Thyroid gland (tissue), 4 donors: ENCODE measurements at regions of chr9 and their contacts with region 1.

Region 1: DNA sequence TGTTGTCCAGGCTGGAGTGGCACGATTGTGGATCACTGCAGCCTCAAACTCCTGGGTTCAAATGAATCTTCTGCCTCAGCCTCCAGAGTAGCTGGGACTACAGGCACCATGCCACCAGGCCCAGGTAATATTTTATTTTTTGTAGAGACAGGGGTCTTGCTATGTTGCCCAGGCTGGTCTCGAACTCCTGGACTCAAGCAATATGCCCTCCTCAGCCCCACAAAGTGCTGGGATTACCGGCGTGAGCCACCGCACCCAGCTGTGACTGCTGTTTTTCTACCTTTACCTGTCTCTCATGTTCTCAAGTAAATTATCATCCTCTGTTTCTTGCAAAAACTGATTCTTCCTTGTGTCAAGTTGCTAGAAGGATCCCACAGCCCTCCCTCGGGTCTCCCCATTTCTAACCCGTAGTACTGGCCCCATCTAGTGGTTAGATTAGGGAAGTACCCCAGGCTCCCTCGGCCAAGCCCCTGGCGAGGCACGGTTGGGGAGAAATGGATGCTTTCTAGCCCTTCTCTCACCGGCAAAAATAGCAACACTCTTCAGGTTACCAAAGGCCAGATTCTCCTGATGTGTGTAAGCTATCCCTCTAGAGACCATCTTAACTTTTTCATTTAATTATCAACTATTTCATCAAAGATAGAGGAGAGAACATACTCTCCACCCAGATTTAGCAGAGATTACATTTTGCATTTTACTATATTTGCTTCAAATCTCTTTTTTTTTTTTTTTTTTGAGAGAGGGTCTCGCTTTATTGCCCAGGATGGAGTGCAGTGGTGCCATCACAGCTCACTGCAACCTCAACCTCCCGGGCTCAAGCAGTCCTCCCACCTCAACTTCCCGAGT is 19.2 kb upstream of the TOR1B start:
- DNase-seq: peak; percentile 64 to 65
- H3K4me3 ChIP-seq: no peak overlapping the region
- H3K27ac ChIP-seq: no peak overlapping the region
- H3K4me1 ChIP-seq: no peaks in the 10 kb centered on the region
- H3K27me3 ChIP-seq: no peaks in the 10 kb centered on the region
- CTCF ChIP-seq: peak; percentile 59 to 91 (median 88)
- POLR2A ChIP-seq: no peak

Region 2: DNA sequence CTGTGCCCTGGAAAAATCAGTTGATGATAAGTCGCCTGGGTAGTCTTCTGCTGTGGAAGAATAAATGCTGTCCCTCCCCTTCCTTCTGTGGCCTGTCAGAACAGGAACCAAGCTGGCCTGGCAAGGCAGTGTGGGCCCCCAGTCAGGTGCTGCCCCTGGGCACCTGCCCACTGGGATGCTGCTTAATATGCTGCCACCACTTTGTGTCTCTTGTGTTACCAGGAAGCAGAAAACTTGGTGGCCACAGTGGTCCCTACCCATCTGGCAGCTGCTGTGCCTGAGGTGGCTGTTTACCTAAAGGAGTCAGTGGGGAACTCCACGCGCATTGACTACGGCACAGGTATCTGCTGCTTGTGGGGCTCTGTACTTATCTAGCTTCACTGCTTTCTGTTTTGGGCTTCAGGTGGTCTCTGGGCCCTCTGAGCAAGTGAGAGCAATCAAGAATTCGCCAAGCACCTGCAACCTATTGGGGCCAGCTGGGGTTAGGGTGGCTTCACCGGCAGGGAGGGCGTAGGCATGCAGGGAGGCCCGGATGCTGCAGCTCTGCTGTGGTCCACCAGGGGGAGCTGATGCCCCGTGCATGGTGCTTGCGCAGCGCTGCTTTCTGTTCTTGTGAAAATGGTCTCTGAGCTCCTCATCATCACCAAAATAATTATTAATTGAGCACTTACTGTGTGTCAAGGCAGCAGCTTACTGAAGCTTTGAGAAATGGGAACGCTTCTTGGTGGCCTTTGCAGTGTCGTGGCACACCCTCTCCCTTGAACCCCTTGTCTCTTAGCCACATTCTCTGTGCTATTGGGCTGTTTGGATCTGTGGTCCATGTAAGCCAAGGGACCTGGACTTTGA is 652.2 kb before region 1 on chr9:
- intact Hi-C with region 1: loop called (anchors 5 kb)
- DNase-seq: peak; percentile 66 to 75
- H3K4me3 ChIP-seq: no peak overlapping the region
- H3K27ac ChIP-seq: no peak overlapping the region
- H3K4me1 ChIP-seq: peaks cover 0 to 14% of the 10 kb centered on the region in 2 donors
- H3K27me3 ChIP-seq: no peaks in the 10 kb centered on the region
- CTCF ChIP-seq: peak; percentile 87 to 99 (median 96)
- POLR2A ChIP-seq: no peak

Region 3: GRCh38 chr9:129648092-129648763 is 135.5 kb before region 1 on chr9:
- intact Hi-C with region 1: loop called (anchors 5 kb)
- DNase-seq: no peak
- H3K4me3 ChIP-seq: no peak overlapping the region
- H3K27ac ChIP-seq: no peak overlapping the region
- H3K4me1 ChIP-seq: no peaks in the 10 kb centered on the region
- H3K27me3 ChIP-seq: no peaks in the 10 kb centered on the region
- CTCF ChIP-seq: no peak
- POLR2A ChIP-seq: no peak

Region 4: GRCh38 chr9:129737479-129738274 is 46.1 kb before region 1 on chr9:
- intact Hi-C with region 1: loop called (anchors 2 kb)
- DNase-seq: peak; percentile 80 to 85
- H3K4me3 ChIP-seq: peak overlapping the region in 2 of 3 donors; percentile 34 to 38
- H3K27ac ChIP-seq: peak overlapping the region in 2 of 3 donors; percentile 69 to 77
- H3K4me1 ChIP-seq: peaks cover 0 to 4% of the 10 kb centered on the region in 2 donors
- H3K27me3 ChIP-seq: no peaks in the 10 kb centered on the region
- CTCF ChIP-seq: peak; percentile 91 to 98 (median 93)
- POLR2A ChIP-seq: peak in 1 of 2 donors; percentile 5

Region 5: GRCh38 chr9:130053504-130054324 is 270.0 kb after region 1 on chr9 and contains the start of gene GPR107:
- intact Hi-C with region 1: no loop called
- DNase-seq: peak; percentile 77 to 79
- H3K4me3 ChIP-seq: peak within 1 kb of the TSS; percentile 47 to 97 (median 82)
- H3K27ac ChIP-seq: peak within 1 kb of the TSS; percentile 81 to 98 (median 86)
- H3K4me1 ChIP-seq: peaks cover 48 to 55% of the 10 kb centered on the region in 2 donors
- H3K27me3 ChIP-seq: no peaks in the 10 kb centered on the region
- CTCF ChIP-seq: no peak
- POLR2A ChIP-seq: peak; percentile 67 to 88
- total RNA-seq, gene GPR107: 43.5 to 65.6 (median 58.7) TPM